ENCODE measurements at regions of chr7 and their contacts with region 1.

Region 1: DNA sequence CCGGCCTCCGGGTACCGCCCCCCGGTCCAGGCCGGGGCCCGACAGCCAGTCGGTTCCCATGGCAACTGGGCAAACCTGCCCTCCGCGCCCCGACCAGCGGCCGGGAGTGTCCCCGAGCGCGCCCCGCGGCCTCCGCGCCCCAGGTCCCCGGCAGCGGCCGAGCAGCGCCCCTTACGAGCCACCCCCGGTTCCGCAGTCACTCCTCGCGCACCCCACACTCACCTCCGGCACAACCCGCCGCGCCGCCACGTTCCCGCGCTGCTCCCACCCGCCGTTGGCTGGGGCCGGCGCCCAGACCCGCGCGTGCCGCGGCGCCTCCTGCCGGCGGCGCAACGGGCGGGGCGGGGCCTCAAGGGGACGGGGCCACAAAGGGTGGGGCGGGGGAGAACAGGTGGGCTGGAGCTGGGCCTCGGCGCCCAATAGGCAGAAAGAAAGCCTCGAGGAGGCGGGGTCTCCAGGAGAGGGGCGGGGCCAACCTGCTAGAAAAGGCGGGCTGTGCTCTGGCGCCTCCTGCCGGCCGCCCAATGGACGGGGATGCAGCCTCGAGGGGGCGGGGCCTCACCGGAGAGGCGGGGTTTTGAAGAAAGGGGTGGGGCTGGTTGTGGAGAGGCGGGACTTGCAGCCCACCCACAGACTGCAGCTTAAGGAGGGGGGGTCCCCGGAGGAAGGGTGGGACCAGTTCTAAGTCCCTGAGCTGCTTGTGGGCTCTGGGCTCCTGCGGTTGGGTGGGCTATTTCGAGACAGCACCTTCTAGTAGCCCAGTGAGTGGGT is at the start of gene RADIL:
- DNase-seq: peak; percentile 86 to 97 (median 93)
- H3K4me3 ChIP-seq: peak within 1 kb of the TSS; percentile 70
- H3K27ac ChIP-seq: peak within 1 kb of the TSS in 1 of 2 donors; percentile 27
- H3K4me1 ChIP-seq: no peaks in the 10 kb centered on the region
- H3K27me3 ChIP-seq: no peaks in the 10 kb centered on the region
- CTCF ChIP-seq: peak in 2 of 3 donors; percentile 76 to 85
- EP300 ChIP-seq: no peak
- POLR2A ChIP-seq: peak; percentile 5
- total RNA-seq, gene RADIL: 1.4 to 5.4 (median 2.4) TPM

Region 2: GRCh38 chr7:4610768-4611467 is 272.6 kb before region 1 on chr7:
- intact Hi-C with region 1: loop called in 1 of 4 experiments (anchors 10 kb)
- DNase-seq: peak; percentile 23 to 67 (median 42)
- H3K4me3 ChIP-seq: no peak overlapping the region
- H3K27ac ChIP-seq: no peak overlapping the region
- H3K4me1 ChIP-seq: peaks cover 1% of the 10 kb centered on the region
- H3K27me3 ChIP-seq: no peaks in the 10 kb centered on the region
- CTCF ChIP-seq: peak; percentile 70 to 81 (median 76)
- EP300 ChIP-seq: no peak
- POLR2A ChIP-seq: no peak

Region 3: GRCh38 chr7:4791738-4792536 is 91.6 kb before region 1 on chr7:
- intact Hi-C with region 1: loop called in 2 of 4 experiments (anchors 5 kb)
- DNase-seq: peak; percentile 77 to 94 (median 88)
- H3K4me3 ChIP-seq: peak overlapping the region; percentile 34
- H3K27ac ChIP-seq: peak overlapping the region; percentile 21 to 48
- H3K4me1 ChIP-seq: peaks cover 1% of the 10 kb centered on the region
- H3K27me3 ChIP-seq: no peaks in the 10 kb centered on the region
- CTCF ChIP-seq: peak; percentile 40 to 100 (median 80)
- EP300 ChIP-seq: no peak
- POLR2A ChIP-seq: no peak

Region 4: GRCh38 chr7:4797858-4798705 is 85.5 kb before region 1 on chr7:
- intact Hi-C with region 1: loop called in 3 of 4 experiments (anchors 5 to 10 kb)
- DNase-seq: peak; percentile 32 to 79 (median 60)
- H3K4me3 ChIP-seq: no peak overlapping the region
- H3K27ac ChIP-seq: no peak overlapping the region
- H3K4me1 ChIP-seq: no peaks in the 10 kb centered on the region
- H3K27me3 ChIP-seq: no peaks in the 10 kb centered on the region
- CTCF ChIP-seq: peak; percentile 76 to 88 (median 83)
- EP300 ChIP-seq: no peak
- POLR2A ChIP-seq: no peak

Region 5: DNA sequence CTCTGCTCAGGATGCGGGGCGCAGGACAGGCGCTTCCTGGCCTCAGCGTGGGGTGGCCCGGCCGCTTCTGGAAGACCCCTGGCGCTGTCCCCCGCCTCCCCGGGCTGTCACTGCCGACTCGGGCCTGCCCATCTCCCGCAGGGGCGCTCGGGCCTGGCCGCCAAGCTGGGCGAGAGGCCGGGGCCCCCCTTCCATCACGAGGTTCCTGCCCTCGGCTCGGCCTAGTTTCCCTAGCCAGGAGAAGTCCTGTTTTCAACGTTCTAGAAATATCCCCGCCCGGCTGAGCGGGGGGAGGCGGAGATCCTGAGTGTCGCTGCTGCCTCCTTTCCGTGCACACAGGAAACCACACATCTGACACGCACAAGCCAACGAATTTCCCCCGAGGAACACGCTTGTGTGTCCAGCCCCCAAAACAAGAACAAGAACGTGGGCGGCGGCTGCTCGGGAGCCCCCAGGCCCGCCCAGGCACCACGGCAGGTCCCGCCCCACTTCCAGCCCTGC is 74.4 kb before region 1 on chr7:
- intact Hi-C with region 1: loop called in 2 of 4 experiments (anchors 5 to 10 kb)
- DNase-seq: no peak
- H3K4me3 ChIP-seq: no peak overlapping the region
- H3K27ac ChIP-seq: no peak overlapping the region
- H3K4me1 ChIP-seq: no peaks in the 10 kb centered on the region
- H3K27me3 ChIP-seq: no peaks in the 10 kb centered on the region
- CTCF ChIP-seq: no peak
- EP300 ChIP-seq: no peak
- POLR2A ChIP-seq: no peak

Region 6: DNA sequence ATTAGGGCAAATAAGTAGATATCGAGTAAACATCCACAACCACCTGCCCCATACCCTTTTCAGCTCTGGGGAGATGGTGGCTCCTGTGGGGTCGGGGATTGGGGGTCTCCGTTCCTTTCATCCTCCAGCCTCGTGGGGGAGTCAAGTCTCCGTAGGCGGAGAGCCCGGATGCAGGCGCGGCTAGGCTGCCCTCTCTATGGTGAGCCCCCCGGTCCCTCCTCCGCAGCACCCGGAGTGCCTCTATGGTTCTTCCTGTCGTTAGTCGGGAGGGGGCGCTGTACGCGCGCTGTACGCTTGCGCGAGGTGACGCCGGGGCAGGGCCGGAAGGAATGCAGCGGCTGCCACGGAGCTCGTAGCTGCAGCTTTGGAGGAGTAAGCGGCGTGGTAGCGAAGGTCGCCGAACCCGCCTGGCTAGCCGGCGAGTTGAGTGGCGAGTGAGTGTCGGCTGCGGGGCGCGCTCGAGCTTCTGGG is 90.2 kb after region 1 on chr7:
- intact Hi-C with region 1: no loop called
- DNase-seq: peak; percentile 86 to 95 (median 90)
- H3K4me3 ChIP-seq: peak overlapping the region; percentile 94
- H3K27ac ChIP-seq: peak overlapping the region; percentile 72 to 74
- H3K4me1 ChIP-seq: peaks cover 3% of the 10 kb centered on the region
- H3K27me3 ChIP-seq: no peaks in the 10 kb centered on the region
- CTCF ChIP-seq: peak; percentile 69 to 89 (median 78)
- EP300 ChIP-seq: no peak
- POLR2A ChIP-seq: peak; percentile 52

Measured in ovary (tissue), 10 donors.